PC-9 (cell line): ENCODE measurements at regions of chr6 and their contacts with region 1.

Region 1: DNA sequence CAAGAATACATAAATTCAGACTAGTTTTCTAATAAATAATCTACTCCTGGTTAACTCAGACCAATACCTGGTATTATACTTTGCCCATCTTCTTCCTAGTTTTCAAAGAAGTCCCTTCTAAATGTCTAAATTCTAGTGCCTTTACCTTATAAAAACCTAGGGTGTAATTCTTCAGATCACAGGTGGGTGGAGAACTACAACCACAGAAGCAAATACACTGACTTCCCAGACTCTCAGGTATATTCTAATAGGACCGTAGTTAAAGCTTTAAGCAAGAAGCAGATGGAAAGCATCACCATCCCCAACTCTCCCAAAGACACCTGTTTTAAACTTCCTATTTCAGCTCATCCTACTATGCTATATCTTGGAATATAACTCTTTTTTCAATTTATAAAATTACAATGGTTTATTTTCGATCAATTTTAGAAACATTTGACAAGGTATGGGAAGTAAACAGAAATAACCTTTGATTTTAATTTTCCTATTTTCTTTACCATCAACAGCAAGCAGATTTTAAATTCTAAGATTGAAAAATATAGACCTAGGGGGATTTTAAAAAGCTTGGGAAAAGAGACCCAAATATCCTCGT is 15.8 kb downstream of the MAN1A1 start:
- DNase-seq: no peak
- H3K4me3 ChIP-seq: no peak overlapping the region
- H3K27ac ChIP-seq: no peak overlapping the region
- H3K4me1 ChIP-seq: no peaks in the 10 kb centered on the region
- H3K27me3 ChIP-seq: no peaks in the 10 kb centered on the region
- CTCF ChIP-seq: peak; percentile 93

Region 2: DNA sequence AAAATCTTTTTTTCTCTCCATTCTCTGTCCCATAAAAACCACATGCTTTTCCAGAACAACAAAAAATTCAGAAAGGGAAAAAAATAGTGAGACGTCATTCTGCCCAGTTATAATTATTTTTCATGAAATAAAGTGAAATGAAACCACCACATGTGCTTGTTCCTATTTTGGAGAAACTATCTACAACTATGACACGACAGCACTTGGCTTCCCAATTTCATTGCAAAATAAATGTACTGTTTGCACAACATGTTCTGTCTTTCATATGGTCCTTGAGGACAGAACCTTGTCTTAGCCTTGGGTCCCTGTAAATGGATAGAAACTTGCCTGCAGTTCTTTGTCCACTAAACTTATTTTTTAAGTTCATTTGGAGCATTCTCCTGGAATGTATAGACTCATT is 21.4 kb after region 1 on chr6:
- CTCF ChIA-PET with region 1: no interaction called
- POLR2A ChIA-PET with region 1: no interaction called
- intact Hi-C with region 1: no loop called
- DNase-seq: no peak
- H3K4me3 ChIP-seq: no peak overlapping the region
- H3K27ac ChIP-seq: no peak overlapping the region
- H3K4me1 ChIP-seq: peaks cover 10% of the 10 kb centered on the region
- H3K27me3 ChIP-seq: no peaks in the 10 kb centered on the region
- CTCF ChIP-seq: no peak

Region 3: DNA sequence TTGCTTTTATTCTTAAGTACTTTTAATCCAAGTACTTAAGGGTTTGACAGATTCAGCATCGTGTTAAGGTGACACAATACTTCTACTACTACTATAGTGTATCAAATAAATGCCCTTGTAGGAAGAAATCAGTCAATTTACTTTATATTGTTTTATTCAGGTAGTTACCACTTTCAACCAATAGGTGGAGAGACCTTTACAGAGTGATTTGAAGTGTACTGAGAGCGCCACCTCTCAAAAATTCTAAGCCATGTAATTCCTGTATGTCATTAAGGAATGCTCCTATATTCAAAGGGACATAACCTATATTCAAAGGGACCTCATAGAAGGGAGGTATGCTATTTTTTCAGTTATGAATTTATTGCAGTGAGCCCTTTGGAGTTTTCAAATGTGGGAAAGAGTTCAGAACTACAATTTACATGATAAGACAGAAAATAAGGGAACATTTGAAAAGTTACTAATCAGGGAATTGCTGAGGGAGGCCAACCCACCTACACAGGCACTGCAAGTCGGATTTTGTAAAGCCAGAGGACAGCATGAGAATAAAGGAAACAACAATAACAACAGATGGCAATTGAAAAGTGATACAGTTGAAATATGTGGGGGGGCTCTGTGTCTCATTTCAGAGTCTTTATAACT is 1044.9 kb after region 1 on chr6:
- CTCF ChIA-PET with region 1: no interaction called
- POLR2A ChIA-PET with region 1: no interaction called
- intact Hi-C with region 1: loop called (anchors 5 kb)
- DNase-seq: peak in 1 of 2 experiments; percentile 47
- H3K4me3 ChIP-seq: no peak overlapping the region
- H3K27ac ChIP-seq: no peak overlapping the region
- H3K4me1 ChIP-seq: no peaks in the 10 kb centered on the region
- H3K27me3 ChIP-seq: no peaks in the 10 kb centered on the region
- CTCF ChIP-seq: peak; percentile 92